ENCODE measurements at regions of chr17 and their contacts with region 1.

Region 1: GRCh38 chr17:48816774-48817590 is at the start of gene TTLL6:
- DNase-seq: peak; percentile 87
- H3K4me3 Mint-ChIP-seq: peak within 1 kb of the TSS; percentile 67
- H3K27ac Mint-ChIP-seq: no peak within 1 kb of the TSS
- H3K4me1 Mint-ChIP-seq: peaks cover 16% of the 10 kb centered on the region
- H3K27me3 Mint-ChIP-seq: peaks cover 59% of the 10 kb centered on the region
- total RNA-seq, gene TTLL6: not detected

Region 2: DNA sequence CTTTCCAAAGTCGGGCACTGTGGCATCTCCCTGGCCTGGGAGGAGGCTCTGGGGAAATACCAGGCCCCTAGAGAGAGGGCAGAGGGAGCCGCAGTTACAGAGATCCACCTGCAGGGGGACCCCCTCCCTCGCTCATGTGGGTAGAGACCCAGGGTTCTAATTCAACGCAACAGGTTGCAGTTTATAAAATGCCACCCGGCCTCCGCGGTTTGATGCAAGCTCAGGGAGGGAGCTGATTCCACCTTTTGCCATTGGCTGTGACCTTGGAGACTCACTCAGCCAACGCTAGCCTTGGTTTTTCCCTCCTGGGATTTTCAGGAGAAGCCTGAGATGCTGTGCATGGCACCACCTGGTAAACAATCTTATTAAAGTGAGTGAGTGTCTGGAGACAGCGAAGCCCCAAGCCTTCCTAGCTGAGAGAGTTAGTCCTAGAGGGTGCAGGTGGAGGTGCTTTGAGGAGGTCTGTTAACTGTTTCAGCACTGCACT is 12.0 kb before region 1 on chr17:
- CTCF ChIA-PET with region 1: interaction called, 19 read pairs
- POLR2A ChIA-PET with region 1: no interaction called
- DNase-seq: peak; percentile 74
- H3K4me3 Mint-ChIP-seq: no peak overlapping the region
- H3K27ac Mint-ChIP-seq: no peak overlapping the region
- H3K4me1 Mint-ChIP-seq: no peaks in the 10 kb centered on the region
- H3K27me3 Mint-ChIP-seq: peaks cover 24% of the 10 kb centered on the region

Region 3: DNA sequence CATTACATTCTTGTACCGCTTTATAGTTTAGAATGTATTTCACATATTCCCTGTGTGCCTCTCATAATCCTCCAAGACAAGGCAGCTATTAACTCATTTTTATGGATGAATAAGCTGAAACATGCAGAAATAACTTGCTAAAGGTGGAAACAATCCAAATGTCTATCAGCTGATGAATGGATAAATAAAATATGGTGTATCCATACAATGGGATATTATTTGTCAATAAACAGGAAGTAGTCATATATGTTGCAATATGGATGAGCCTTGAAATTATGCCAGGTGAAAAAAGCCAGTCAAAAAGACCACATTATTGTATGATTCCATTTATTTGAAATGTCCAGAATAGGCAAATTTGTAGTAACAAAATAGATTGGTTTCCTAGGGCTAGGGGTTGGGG is 51.0 kb after region 1 on chr17:
- CTCF ChIA-PET with region 1: no interaction called
- POLR2A ChIA-PET with region 1: no interaction called
- DNase-seq: no peak
- H3K4me3 Mint-ChIP-seq: no peak overlapping the region
- H3K27ac Mint-ChIP-seq: no peak overlapping the region
- H3K4me1 Mint-ChIP-seq: peaks cover 6% of the 10 kb centered on the region
- H3K27me3 Mint-ChIP-seq: peaks cover 1% of the 10 kb centered on the region